ENCODE measurements at regions of chrX and their contacts with region 1.

Region 1: DNA sequence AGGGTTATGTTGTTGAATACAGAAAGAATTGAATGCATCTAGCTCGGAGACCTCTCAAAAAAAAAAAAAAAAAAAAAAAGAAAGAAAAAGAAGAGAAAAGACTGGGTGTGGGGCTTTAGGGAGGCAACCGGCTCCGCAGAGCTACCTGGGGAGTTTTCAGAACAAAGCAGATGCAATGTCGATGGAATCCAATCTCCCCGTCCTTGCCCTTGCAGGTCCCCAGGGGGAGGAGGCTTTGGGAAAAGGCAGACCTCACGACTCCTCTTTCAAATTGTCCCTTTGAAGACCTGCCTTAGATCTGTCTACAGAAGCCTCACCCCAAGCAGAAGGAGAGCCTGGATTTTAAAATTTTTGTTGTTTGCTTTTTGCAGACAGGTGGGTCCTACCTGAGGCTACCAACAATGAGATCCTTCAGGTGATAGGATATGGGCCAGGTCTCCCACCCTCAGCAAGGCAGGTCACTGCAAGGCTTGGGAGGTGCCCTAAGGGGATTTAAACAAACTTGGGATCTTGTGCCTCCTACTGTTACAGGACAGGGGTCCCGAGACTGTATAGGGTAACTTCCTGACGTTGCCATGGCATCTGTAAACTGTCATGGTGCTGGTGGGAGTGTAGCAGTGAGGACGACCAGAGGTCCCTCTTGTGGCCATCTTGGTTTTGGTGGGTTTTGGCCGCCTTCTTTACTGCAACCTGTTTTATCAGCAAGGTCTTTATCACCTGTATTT is 75.2 kb upstream of the PRKX start:
- DNase-seq: peak; percentile 60
- H3K4me3 Mint-ChIP-seq: no peak overlapping the region
- H3K27ac Mint-ChIP-seq: no peak overlapping the region
- H3K4me1 Mint-ChIP-seq: peaks cover 7% of the 10 kb centered on the region
- H3K27me3 Mint-ChIP-seq: peaks cover 7% of the 10 kb centered on the region

Region 2: DNA sequence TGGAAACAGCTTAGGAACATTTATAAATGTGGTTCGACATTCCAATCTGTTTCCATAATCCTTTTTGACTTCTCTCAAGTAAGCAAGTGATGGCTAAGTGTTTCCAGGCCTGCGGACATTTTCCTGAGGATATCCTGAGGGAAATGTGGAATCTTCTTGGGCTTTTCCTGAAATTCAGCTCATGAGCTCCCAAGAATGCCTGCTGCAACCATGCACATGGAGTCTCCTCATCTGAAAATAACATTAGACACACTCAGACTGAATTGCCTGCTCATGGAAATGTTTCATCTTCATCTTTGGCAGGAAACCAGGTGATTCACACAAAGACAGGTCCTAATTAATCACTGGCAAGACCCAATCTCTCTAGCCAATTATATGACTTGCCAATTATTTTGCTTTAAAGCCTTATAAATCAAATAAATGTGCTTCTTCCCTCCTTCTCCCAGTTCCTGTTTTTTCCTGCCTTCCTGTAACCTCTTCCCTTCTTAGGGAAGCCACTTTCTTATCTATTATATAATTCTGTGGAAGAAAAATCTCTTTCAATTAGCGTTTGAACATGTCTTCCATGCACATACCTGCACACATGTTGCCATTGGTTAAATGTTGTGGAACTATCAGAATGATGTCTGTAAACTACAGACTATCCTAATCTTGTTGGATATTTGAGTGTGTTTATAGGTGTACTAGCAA is 337.6 kb before region 1 on chrX:
- intact Hi-C with region 1: no loop called
- DNase-seq: no peak
- H3K4me3 Mint-ChIP-seq: no peak overlapping the region
- H3K27ac Mint-ChIP-seq: no peak overlapping the region
- H3K4me1 Mint-ChIP-seq: no peaks in the 10 kb centered on the region
- H3K27me3 Mint-ChIP-seq: no peaks in the 10 kb centered on the region

Region 3: DNA sequence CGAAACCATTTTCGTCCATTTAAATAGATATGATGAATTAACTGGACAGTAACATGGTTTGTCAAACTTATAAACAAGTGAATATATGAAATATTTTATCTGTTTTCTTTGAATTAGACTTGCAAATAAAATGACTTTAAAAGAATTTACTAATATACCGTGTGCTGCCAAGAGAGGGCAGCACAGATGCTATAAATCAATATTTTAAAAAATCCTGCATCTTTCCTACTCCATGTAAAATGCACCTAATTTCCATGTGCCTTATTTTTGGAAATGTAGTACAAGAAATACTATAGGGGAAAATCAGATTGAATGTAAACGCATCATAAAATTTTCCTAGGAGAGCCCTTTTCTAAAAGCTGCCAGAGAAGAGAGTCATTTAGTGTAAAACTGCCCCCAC is 137.4 kb before region 1 on chrX:
- intact Hi-C with region 1: loop called (anchors 10 kb)
- DNase-seq: peak; percentile 55
- H3K4me3 Mint-ChIP-seq: no peak overlapping the region
- H3K27ac Mint-ChIP-seq: no peak overlapping the region
- H3K4me1 Mint-ChIP-seq: peaks cover 9% of the 10 kb centered on the region
- H3K27me3 Mint-ChIP-seq: no peaks in the 10 kb centered on the region

Region 4: DNA sequence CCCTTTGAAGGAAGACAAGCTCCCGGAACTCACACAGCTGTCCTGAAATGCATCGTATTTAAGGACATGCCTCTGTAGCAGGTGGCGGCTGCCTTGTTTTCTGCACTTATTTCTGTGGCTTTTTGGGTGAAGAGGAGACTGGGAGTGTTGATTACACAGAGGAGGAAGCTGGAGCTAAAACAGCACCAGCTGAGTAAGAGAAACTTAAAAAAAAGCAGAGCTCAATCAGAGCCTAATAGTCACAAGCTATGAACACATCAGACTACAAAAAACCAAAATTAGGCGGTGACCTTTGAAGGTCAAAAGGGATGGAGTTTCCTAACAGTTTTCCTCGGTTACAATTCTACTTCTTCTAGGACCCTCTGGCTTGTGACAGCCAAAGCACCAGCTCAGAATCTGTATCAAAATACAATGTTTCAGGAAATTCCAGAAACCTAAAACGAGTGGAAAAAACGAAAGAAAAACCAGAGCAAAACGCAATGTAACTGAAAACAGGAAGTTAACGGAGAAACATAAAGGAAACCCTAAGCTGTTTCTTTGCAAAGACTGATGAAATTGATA is 88.8 kb before region 1 on chrX:
- intact Hi-C with region 1: loop called (anchors 10 kb)
- DNase-seq: peak; percentile 61
- H3K4me3 Mint-ChIP-seq: peak overlapping the region; percentile 82
- H3K27ac Mint-ChIP-seq: peak overlapping the region; percentile 91
- H3K4me1 Mint-ChIP-seq: peaks cover 50% of the 10 kb centered on the region
- H3K27me3 Mint-ChIP-seq: no peaks in the 10 kb centered on the region

Region 5: DNA sequence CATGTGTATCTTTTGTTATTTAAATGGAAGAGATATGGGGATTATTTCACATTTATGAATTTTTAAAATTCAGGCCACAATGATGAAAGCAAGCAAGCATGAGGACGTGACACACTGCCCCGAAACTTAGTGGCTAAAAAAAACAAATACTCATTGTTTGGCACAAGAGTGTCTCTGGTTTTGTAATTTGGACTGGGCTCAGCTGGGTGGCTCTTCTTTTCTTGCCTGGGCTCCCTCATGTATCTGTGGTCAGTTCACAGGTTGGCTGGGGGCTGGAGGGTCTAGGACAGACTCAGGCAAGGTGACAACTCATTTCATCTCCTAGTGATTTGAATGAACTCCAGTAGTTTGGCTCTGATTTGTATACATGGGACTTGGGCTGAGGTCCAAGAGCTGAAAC is 163.2 kb after region 1 on chrX:
- intact Hi-C with region 1: no loop called
- DNase-seq: no peak
- H3K4me3 Mint-ChIP-seq: no peak overlapping the region
- H3K27ac Mint-ChIP-seq: no peak overlapping the region
- H3K4me1 Mint-ChIP-seq: no peaks in the 10 kb centered on the region
- H3K27me3 Mint-ChIP-seq: no peaks in the 10 kb centered on the region